SK-N-SH (cell line): ENCODE measurements at regions of chr9 and their contacts with region 1.

Region 1: GRCh38 chr9:37913480-37914153 is 9.7 kb upstream of the SLC25A51 start:
- DNase-seq: peak; percentile 90
- H3K4me3 ChIP-seq: no peak overlapping the region; a peak in 1 of 4 replicates
- H3K27ac ChIP-seq: peak overlapping the region; percentile 30 to 48; a peak in 3 of 4 replicates
- H3K4me1 ChIP-seq: peaks cover 5 to 7% of the 10 kb centered on the region in 2 experiments; a peak in 1 of 4 replicates
- H3K27me3 ChIP-seq: no peaks in the 10 kb centered on the region
- CTCF ChIP-seq: peak; percentile 97
- EP300 ChIP-seq: no peak
- RAD21 ChIP-seq: peak; percentile 100

Region 2: GRCh38 chr9:37852222-37852621 is 61.4 kb before region 1 on chr9:
- CTCF ChIA-PET with region 1: no interaction called
- POLR2A ChIA-PET with region 1: no interaction called
- DNase-seq: no peak
- H3K4me3 ChIP-seq: no peak overlapping the region
- H3K27ac ChIP-seq: no peak overlapping the region
- H3K4me1 ChIP-seq: no peaks in the 10 kb centered on the region; a peak in 1 of 4 replicates
- H3K27me3 ChIP-seq: no peaks in the 10 kb centered on the region
- CTCF ChIP-seq: no peak
- EP300 ChIP-seq: no peak
- RAD21 ChIP-seq: no peak

Region 3: GRCh38 chr9:37938121-37938891 is 24.7 kb after region 1 on chr9:
- CTCF ChIA-PET with region 1: interaction called, 41 read pairs
- POLR2A ChIA-PET with region 1: no interaction called
- DNase-seq: peak; percentile 79
- H3K4me3 ChIP-seq: peak overlapping the region; percentile 25 to 29; a peak in 2 of 4 replicates
- H3K27ac ChIP-seq: peak overlapping the region; percentile 94 to 100
- H3K4me1 ChIP-seq: peaks cover 52 to 90% of the 10 kb centered on the region in 2 experiments
- H3K27me3 ChIP-seq: no peaks in the 10 kb centered on the region
- CTCF ChIP-seq: 0 out of 2 replicates have a peak, but pooled peaks have one; percentile 13
- EP300 ChIP-seq: peak; percentile 62 to 66
- RAD21 ChIP-seq: peak; percentile 1; the same call in 1 of the 2 replicates

Region 4: GRCh38 chr9:37983381-37984067 is 69.9 kb after region 1 on chr9:
- CTCF ChIA-PET with region 1: interaction called, 19 read pairs
- POLR2A ChIA-PET with region 1: no interaction called
- DNase-seq: no peak
- H3K4me3 ChIP-seq: no peak overlapping the region
- H3K27ac ChIP-seq: no peak overlapping the region
- H3K4me1 ChIP-seq: peaks cover 50 to 64% of the 10 kb centered on the region in 2 experiments
- H3K27me3 ChIP-seq: no peaks in the 10 kb centered on the region
- CTCF ChIP-seq: no peak
- EP300 ChIP-seq: no peak
- RAD21 ChIP-seq: no peak

Region 5: DNA sequence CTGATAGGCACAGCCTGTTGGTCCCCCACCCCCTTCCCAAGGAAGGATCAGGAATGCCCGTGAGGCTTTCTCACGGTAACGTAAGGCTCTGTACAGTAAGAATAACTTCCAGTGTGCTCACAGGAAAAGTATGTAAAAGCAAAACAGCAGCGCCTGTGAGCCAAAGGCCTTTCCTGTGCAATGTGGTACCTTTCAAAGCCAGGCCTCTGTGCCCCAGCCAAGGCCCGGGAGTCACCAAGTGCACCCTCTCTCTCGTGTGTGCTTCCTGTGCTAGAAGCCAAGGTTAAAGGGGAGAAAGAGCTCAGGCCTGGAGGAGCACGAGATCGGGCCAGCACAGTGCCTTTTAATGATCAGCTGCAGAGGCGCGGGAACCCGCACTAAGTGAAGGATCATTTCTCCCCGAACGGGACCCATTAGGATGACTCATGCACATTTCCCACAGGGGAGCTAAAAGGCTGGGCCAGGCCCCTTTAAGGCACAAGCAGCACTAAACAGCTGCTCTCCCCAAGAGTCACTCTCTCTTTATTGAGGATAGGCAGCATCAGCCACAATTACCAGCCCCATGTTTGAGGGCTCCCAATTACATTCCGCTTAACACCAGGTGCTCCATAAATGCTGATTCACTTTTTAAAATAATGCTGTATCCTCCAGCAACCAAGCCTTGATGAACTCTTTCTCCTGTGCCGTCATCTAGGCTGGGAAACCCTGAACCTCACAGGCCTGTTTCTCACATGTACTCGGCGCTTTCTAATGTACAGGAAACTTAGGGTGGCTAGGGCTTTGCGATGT is 112.6 kb after region 1 on chr9:
- CTCF ChIA-PET with region 1: interaction called, 25 read pairs
- POLR2A ChIA-PET with region 1: no interaction called
- DNase-seq: peak; percentile 47
- H3K4me3 ChIP-seq: no peak overlapping the region
- H3K27ac ChIP-seq: peak overlapping the region; percentile 88 to 100
- H3K4me1 ChIP-seq: peaks cover 62 to 82% of the 10 kb centered on the region in 2 experiments
- H3K27me3 ChIP-seq: no peaks in the 10 kb centered on the region
- CTCF ChIP-seq: no peak
- EP300 ChIP-seq: peak in 1 of 2 experiments; percentile 67; a peak in 1 of 4 replicates
- RAD21 ChIP-seq: no peak; the same call in 1 of the 2 replicates

Region 6: DNA sequence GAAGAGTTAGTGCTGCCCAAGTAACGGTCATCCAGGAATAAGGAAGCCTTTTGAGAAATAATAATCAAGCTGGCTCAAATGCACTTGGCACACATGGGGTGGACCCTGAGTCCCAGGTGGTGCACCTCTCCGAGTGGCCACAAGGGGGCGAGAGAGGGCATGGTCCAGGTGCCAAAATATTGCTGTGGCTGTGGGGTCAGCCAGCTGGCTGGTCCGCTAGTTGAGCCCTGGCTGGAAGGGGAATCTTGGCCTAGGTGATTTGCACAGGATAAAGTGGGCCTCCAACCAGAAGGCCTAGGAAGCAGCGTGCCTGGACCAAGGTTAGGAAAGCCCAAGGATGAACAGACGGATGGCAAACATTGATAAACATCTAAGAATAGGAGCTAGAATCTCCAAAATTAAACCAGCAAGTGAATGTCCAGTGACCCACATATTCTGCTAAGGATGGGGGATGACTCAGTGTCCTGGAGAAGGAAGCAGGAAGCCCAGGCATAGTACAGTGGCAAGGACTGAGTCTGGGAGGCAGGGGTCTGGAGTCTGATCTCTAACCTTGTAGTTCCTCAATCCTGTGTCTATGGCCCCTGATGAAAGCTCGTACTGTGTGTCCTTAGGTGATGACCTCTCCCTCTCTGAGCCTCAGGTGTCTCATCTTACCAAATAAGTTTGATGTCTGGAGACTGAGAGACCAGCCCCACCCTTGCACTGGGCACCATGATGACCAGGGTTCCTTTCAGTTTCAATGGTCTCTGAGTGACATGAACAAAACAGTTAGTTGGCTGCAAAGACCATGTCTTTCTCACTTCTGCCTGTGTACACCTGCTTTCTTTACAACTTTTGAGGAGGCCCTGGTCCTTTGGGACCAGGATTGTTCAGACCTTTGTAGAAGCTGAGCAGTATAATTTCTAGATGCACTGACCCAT is 174.6 kb after region 1 on chr9:
- CTCF ChIA-PET with region 1: interaction called, 68 read pairs
- POLR2A ChIA-PET with region 1: no interaction called
- DNase-seq: peak; percentile 84
- H3K4me3 ChIP-seq: no peak overlapping the region
- H3K27ac ChIP-seq: peak overlapping the region in 1 of 2 experiments; percentile 7; a peak in 1 of 4 replicates
- H3K4me1 ChIP-seq: peaks cover 0 to 11% of the 10 kb centered on the region in 2 experiments; a peak in 1 of 4 replicates
- H3K27me3 ChIP-seq: no peaks in the 10 kb centered on the region
- CTCF ChIP-seq: peak; percentile 95
- EP300 ChIP-seq: no peak
- RAD21 ChIP-seq: peak; percentile 84

Region 7: GRCh38 chr9:38339087-38339486 is 425.5 kb after region 1 on chr9:
- CTCF ChIA-PET with region 1: interaction called, 11 read pairs
- POLR2A ChIA-PET with region 1: no interaction called
- DNase-seq: no peak
- H3K4me3 ChIP-seq: no peak overlapping the region
- H3K27ac ChIP-seq: no peak overlapping the region; a peak in 1 of 4 replicates
- H3K4me1 ChIP-seq: peaks cover 0 to 22% of the 10 kb centered on the region in 2 experiments; a peak in 1 of 4 replicates
- H3K27me3 ChIP-seq: no peaks in the 10 kb centered on the region; the same call in none of the 2 replicates
- CTCF ChIP-seq: no peak
- EP300 ChIP-seq: no peak
- RAD21 ChIP-seq: no peak

Region 8: GRCh38 chr9:38371495-38371894 is 457.9 kb after region 1 on chr9:
- CTCF ChIA-PET with region 1: interaction called, 25 read pairs
- POLR2A ChIA-PET with region 1: interaction called, 4 read pairs
- DNase-seq: no peak
- H3K4me3 ChIP-seq: no peak overlapping the region
- H3K27ac ChIP-seq: peak overlapping the region in 1 of 2 experiments; percentile 97; a peak in 2 of 4 replicates
- H3K4me1 ChIP-seq: peaks cover 0 to 31% of the 10 kb centered on the region in 2 experiments; a peak in 2 of 4 replicates
- H3K27me3 ChIP-seq: peaks cover 14% of the 10 kb centered on the region; the same call in 1 of the 2 replicates
- CTCF ChIP-seq: peak; percentile 14; the same call in 1 of the 2 replicates
- EP300 ChIP-seq: no peak
- RAD21 ChIP-seq: peak; percentile 74